GM13976 (cell line): ENCODE measurements at regions of chr16 and their contacts with region 1.

Region 1: GRCh38 chr16:50024684-50025536 is at the start of gene CNEP1R1:
- DNase-seq: peak; percentile 99
- CTCF ChIP-seq: peak; percentile 99

Region 2: DNA sequence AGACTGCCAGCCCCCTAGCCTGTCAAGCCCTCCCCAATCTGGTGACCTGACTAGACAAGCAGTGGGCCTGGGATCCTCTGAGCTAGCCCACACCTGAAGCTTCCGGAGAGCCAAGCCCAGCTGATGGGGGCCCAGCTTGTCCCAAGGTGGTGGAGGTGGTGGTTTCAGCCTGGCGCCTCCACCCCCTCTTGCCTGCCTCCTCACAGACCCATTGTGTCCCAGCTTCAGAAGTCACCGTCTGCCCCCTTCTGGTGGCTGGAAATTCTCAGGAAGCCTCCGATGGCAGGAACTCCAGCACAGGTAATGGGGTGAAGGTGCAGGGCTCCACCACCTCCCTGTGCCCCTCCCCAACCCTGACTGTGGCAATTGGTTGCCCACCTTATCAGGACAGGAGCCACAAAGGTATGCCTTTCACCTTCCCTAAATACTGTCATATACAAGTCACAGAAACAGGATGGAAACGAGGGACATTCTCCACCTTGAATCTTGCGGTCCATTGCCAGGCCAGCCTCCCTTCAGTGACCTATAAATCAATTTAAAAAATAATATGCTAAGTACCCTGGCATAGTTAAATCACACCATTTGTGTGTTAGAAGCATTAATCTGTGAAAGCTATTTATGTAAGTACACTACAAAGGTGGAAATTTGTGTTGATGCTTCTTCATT is 103.0 kb before region 1 on chr16:
- in situ Hi-C with region 1: loop called (anchors 25 kb)
- DNase-seq: peak; percentile 78
- CTCF ChIP-seq: peak; percentile 37

Region 3: GRCh38 chr16:50210266-50211038 is 185.5 kb after region 1 on chr16:
- in situ Hi-C with region 1: loop called (anchors 10 kb)
- DNase-seq: peak; percentile 64
- CTCF ChIP-seq: peak; percentile 77

Region 4: DNA sequence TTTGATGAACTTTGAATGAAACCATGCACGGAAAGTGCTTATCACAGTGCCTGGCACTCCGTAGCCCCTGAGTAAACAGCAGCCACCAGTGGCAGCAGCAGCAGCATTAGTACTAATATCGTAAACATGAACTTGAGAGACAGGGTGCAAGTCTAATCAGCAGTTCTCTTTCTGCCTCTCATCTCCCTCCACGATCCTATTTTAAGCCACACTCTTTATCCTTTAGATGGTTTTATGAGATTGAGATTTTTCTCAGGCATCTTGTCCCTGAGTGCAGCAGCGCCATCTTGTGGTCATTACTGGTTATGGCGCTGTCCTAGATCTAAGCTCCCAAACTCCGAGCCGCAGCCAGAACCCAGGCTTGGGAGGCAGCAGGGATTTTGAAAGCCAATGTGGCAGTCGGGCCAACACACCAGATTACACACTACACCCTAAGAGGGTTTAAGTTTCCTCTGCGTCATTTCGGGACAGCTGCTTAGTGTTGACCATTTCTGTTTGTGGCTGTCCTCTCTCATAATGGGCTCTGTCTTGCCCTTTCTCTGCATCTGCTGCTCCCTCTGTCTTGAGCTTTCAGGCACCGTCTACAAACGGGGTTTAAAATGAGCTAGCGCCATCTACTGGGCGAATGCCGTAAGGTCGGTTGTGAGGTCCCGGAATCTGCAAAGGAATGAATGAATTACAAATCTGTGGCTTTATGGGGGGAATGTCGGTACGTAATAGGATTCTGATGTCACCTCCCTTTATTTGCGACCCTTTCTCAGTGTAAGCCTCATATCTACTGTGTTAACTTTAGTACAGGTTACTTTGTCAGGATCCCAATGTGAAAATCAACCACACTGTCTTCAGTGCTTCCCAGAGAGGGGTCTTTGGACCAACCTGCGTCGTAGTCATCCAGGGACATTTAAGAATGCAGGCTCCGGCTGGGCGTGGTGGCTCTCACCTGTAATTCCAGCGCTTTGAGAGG is 781.5 kb after region 1 on chr16:
- in situ Hi-C with region 1: loop called (anchors 25 kb)
- DNase-seq: peak; percentile 82
- CTCF ChIP-seq: peak; percentile 95